K562 (cell line): ENCODE measurements at regions of chr3 and their contacts with region 1.

Region 1: GRCh38 chr3:194084284-194084683 is 51.7 kb upstream of the HES1 start:
- DNase-seq: no peak
- ATAC-seq: peak; percentile 11; the same call in 2 of the 3 replicates
- H3K4me3 ChIP-seq: no peak overlapping the region
- H3K27ac ChIP-seq: no peak overlapping the region
- H3K4me1 ChIP-seq: peaks cover 13 to 37% of the 10 kb centered on the region in 2 experiments
- H3K27me3 ChIP-seq: no peaks in the 10 kb centered on the region
- CTCF ChIP-seq: no peak
- EP300 ChIP-seq: no peak
- POLR2A ChIP-seq: no peak
- RAD21 ChIP-seq: no peak

Region 2: DNA sequence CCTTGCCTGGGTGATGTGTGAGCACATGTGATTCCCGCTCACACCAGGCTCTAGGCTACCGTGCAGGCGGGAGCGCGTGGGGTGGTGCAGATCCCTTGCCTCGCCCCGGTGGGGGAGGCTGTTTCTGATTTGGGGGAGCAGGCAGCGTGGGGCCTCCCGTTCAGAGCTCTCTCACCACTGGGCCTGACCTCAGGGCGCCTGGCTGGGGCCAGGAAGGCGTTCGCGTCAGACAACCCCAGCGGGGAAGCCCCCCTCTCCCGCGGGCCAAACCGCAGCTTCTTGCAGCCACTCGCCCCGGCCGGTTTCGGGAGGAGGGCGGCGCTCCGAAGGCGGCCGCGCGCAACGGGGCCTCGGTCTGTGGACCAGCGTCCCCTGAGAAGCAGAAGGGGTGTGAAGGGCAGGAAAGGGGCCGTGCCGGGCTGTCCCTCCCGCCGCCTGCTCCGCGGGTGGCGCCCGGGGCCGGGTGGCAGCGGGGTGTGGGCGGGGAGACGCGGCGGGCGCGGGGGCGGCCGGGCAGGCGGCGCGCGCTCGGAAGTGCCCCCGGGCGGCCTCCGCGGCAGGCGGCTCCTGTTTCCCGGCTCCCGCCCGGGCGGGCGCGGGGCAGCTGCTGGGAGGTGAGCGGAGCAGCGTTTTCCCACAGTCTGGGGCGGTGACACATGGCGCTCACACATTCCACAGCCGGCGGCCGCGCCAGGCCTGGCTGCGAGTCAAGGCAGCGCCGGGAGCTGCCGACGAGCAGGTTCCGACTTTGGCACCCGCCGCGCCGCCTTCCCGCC is 13.5 kb before region 1 on chr3:
- CTCF ChIA-PET with region 1: no interaction called
- POLR2A ChIA-PET with region 1: interaction called, 22 read pairs
- in situ Hi-C with region 1: no loop called
- intact Hi-C with region 1: no loop called
- DNase-seq: peak; percentile 72 to 93 (median 87)
- ATAC-seq: peak; percentile 89
- H3K4me3 ChIP-seq: peak overlapping the region; percentile 48
- H3K27ac ChIP-seq: peak overlapping the region; percentile 79; the same call in 2 of the 3 replicates
- H3K4me1 ChIP-seq: peaks cover 21% of the 10 kb centered on the region in 2 experiments
- H3K27me3 ChIP-seq: no peaks in the 10 kb centered on the region
- CTCF ChIP-seq: no peak
- EP300 ChIP-seq: no peak
- POLR2A ChIP-seq: peak; percentile 61; the same call in 1 of the 2 replicates
- RAD21 ChIP-seq: peak in 1 of 2 experiments; percentile 13; a peak in 1 of 4 replicates

Region 3: DNA sequence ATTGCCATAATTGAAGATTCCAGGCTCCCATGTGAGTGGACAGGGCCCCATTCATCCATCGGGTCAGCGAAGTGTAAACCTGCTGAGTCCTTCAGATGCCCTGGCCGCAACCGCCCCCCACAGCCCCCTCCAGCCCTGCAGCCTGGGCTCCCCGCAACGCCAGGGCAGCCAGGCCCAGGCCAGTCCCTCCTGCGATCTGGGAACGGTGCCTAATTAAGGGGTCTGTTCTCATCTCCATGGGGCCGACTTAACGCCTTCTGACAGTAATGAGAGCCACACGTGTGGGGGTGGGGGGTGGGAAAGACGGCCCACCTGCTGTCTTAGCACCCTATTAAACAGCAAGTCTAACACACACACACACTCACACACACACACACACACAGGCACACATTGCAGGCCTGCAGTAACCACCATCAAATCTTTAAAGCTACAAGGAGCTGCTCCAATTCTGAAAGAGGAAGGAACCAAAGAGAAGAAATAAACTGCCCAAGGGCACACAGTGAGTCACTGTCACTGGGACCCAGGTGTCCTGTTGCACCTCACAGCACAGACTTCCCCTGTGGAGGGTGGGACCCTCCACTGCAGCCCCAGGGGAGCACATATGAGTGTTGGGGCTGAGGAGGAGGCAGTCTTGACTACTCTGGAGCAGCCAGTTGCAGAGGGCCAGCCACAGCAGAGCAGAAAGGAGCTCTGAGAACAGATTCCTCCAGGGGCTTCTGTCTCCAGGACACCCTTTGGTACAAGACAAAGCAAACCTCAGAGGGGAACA is 19.9 kb after region 1 on chr3:
- CTCF ChIA-PET with region 1: no interaction called
- POLR2A ChIA-PET with region 1: interaction called, 23 read pairs
- in situ Hi-C with region 1: no loop called
- intact Hi-C with region 1: no loop called
- DNase-seq: no peak
- ATAC-seq: no peak
- H3K4me3 ChIP-seq: no peak overlapping the region
- H3K27ac ChIP-seq: no peak overlapping the region
- H3K4me1 ChIP-seq: peaks cover 0 to 3% of the 10 kb centered on the region in 2 experiments; a peak in 2 of 5 replicates
- H3K27me3 ChIP-seq: no peaks in the 10 kb centered on the region
- CTCF ChIP-seq: no peak
- EP300 ChIP-seq: no peak
- POLR2A ChIP-seq: no peak
- RAD21 ChIP-seq: no peak

Region 4: GRCh38 chr3:194404365-194405140 is 320.3 kb after region 1 on chr3:
- CTCF ChIA-PET with region 1: no interaction called
- POLR2A ChIA-PET with region 1: no interaction called
- in situ Hi-C with region 1: no loop called
- intact Hi-C with region 1: no loop called
- DNase-seq: peak in 1 of 4 experiments; percentile 73
- ATAC-seq: 0 out of 3 replicates have a peak, but pooled peaks have one; percentile 33
- H3K4me3 ChIP-seq: no peak overlapping the region
- H3K27ac ChIP-seq: no peak overlapping the region
- H3K4me1 ChIP-seq: no peaks in the 10 kb centered on the region; a peak in 2 of 5 replicates
- H3K27me3 ChIP-seq: no peaks in the 10 kb centered on the region
- CTCF ChIP-seq: peak; percentile 46 to 81 (median 58); a peak in 5 of 6 replicates
- EP300 ChIP-seq: no peak
- POLR2A ChIP-seq: no peak
- RAD21 ChIP-seq: peak; percentile 69 to 79

Region 5: DNA sequence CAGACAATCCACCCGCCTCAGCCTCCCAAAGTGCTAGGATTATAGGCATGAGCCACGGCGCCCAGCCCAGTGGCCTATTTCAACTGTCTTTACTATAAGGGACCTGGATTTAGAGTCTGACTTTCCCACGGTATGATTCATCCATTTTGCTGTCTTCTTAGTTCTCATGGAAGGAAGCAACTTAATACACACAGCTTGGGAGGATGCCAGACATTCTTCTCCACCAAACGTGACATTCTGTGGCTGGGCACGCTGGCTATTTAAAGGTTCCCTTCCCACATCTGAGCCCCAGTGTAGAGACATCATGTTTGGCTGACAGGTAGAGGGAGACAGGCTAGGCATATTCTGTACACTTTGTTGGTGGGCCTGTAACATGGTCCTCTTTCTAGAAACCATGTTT is 627.6 kb after region 1 on chr3:
- CTCF ChIA-PET with region 1: no interaction called
- POLR2A ChIA-PET with region 1: no interaction called
- in situ Hi-C with region 1: no loop called
- intact Hi-C with region 1: no loop called
- DNase-seq: no peak
- ATAC-seq: no peak
- H3K4me3 ChIP-seq: no peak overlapping the region
- H3K27ac ChIP-seq: no peak overlapping the region
- H3K4me1 ChIP-seq: no peaks in the 10 kb centered on the region
- H3K27me3 ChIP-seq: peaks cover 19 to 51% of the 10 kb centered on the region in 2 experiments; a peak in 4 of 5 replicates
- CTCF ChIP-seq: no peak
- EP300 ChIP-seq: no peak
- POLR2A ChIP-seq: no peak
- RAD21 ChIP-seq: no peak